ENCODE measurements at regions of chr11 and their contacts with region 1.

Region 1: DNA sequence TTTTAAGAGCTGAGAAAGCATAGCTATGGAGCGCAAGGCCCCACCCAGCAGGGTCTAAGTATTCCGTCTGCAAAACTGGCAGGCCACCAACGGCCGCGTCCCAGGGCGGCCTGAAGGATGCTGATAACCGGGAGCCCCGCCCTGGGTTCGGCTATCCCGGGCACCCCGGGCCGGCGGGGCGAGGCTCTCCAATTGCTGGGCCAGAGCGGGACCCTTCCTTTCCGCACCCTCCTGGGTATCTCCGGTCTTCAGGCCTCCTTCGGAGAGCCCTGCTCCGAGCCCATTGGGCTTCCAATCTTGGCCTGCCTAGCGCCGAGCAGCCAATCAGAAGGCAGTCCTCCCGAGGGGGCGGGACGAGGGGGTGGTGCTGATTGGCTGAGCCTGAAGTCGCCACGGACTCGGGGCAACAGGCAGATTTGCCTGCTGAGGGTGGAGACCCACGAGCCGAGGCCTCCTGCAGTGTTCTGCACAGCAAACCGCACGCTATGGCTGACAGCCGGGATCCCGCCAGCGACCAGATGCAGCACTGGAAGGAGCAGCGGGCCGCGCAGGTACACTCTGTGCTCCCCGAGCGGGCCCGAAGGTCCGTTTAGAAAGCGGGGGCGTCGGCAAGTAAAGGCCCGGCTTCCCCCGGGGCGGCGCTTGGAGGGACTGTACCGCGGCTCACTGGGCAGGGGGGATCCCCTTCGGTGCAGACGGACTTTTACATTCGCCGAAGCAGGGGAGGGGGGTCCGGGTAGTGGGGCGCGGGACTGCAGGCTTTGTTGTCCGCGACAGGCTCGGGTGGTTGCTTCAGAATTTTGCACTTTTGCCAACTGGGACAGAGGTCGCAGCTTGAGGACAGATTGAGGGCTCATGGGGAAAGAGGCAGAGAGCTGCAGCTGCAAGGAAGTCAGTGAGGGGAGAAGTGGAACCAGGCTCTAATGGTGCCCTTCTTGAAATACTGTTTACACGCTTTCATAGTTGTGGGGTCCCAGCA is at the start of gene CAT:
- DNase-seq: peak; percentile 99
- H3K4me3 Mint-ChIP-seq: peak within 1 kb of the TSS; percentile 95
- H3K27ac Mint-ChIP-seq: peak within 1 kb of the TSS; percentile 90
- H3K4me1 Mint-ChIP-seq: peaks cover 17% of the 10 kb centered on the region
- H3K27me3 Mint-ChIP-seq: no peaks in the 10 kb centered on the region
- total RNA-seq, gene CAT: 17.4 and 19.0 TPM in 2 replicates

Region 2: GRCh38 chr11:34105079-34105956 is 333.5 kb before region 1 on chr11 and contains the start of gene NAT10:
- intact Hi-C with region 1: loop called (anchors 1 kb)
- DNase-seq: peak; percentile 99
- H3K4me3 Mint-ChIP-seq: peak within 1 kb of the TSS; percentile 97
- H3K27ac Mint-ChIP-seq: peak within 1 kb of the TSS; percentile 90
- H3K4me1 Mint-ChIP-seq: peaks cover 47% of the 10 kb centered on the region
- H3K27me3 Mint-ChIP-seq: peaks cover 3% of the 10 kb centered on the region
- total RNA-seq, gene NAT10: 162 and 169 TPM in 2 replicates

Region 3: DNA sequence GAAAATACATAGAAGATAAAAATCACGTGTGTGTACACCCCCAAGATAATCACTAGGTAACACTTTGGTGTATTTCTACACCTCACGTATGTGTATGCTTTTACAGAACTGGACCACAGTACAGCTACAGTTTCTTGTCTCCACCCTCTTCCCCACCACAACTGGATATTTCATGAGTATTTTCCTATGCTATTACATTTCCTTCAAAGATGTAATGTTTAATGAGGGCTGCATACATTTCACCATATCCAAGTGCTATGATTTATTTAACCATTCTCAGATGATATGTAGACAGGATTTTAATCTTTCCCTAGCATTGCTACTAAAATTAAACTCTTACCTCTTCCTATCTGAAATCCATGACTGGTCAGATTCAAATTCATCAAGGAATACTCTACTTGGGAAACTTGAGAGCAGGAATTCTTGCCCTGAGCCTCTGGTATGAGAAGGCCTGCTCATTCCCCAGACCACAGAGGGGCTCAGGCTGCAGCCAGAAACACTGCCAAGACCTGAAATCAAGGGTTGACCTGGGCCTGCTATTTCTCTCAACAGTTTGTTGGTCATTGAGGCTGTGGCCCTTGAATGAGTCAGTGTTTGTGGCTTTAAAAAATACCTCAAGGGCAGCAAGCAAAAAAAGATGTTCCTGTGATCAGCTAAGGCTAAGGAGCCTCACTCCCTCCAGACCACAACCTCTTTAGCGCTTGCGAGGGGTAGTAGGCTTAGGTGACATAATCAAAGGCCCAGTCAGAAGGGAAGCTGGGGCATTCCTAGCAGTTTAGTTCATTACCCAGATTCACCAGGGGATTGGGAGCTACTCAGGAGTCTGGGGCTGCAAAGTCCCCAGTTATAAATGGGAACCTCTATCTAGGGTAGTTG is 136.5 kb before region 1 on chr11:
- intact Hi-C with region 1: no loop called
- DNase-seq: no peak
- H3K4me3 Mint-ChIP-seq: no peak overlapping the region
- H3K27ac Mint-ChIP-seq: no peak overlapping the region
- H3K4me1 Mint-ChIP-seq: peaks cover 17% of the 10 kb centered on the region
- H3K27me3 Mint-ChIP-seq: no peaks in the 10 kb centered on the region

Region 4: GRCh38 chr11:34366522-34366921 is 72.3 kb before region 1 on chr11:
- intact Hi-C with region 1: loop called (anchors 1 kb)
- DNase-seq: peak; percentile 64
- H3K4me3 Mint-ChIP-seq: no peak overlapping the region
- H3K27ac Mint-ChIP-seq: no peak overlapping the region
- H3K4me1 Mint-ChIP-seq: peaks cover 8% of the 10 kb centered on the region
- H3K27me3 Mint-ChIP-seq: peaks cover 22% of the 10 kb centered on the region

Region 5: DNA sequence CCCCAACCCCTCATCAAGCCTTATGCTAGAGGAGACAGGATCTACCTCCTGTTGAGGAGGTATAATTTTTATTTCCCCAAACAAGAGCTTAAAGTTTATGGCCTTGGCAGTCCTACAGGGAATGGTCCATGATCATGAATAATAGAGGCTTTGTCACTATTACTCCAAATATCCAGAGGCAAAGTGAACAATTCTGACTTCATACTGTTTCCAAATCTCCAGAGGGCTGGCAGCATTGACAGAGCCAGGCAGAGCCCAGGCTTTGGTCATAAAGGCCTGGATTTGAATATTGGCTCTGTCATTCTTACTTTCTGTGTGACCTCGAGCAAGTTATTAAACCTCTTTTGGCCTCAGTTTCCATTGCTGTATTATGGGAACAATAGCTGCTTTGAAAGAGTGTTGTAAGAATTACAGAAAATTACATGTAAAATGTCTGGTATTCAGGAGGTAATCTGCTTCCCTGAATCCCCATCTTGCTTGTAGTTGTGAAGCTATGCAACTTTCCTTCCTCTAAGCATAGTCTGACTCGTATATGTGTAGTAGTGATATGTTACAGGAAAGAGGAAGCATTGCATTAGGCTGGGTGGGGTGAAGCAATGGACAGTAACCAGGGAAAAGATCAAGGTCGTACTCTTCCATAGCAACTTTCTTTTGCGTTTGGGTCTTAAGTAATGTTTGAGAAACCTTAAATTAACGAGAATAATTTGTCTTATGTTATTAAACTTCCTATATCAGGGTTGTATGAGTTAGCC is 788.9 kb after region 1 on chr11:
- intact Hi-C with region 1: no loop called
- DNase-seq: no peak
- H3K4me3 Mint-ChIP-seq: no peak overlapping the region
- H3K27ac Mint-ChIP-seq: no peak overlapping the region
- H3K4me1 Mint-ChIP-seq: peaks cover 9% of the 10 kb centered on the region
- H3K27me3 Mint-ChIP-seq: no peaks in the 10 kb centered on the region

Measured in activated CD4-positive, alpha-beta T cell treated with anti-CD3 and anti-CD28 coated beads, Interleukin-2, amount 10 ng/mL, durations not matched to agents 24 days and 14 days (primary cell).